Head of caudate nucleus (tissue), 42 donors: ENCODE measurements at regions of chr3 and their contacts with region 1.

Region 1: GRCh38 chr3:44861412-44862220 is at the start of gene TMEM42:
- DNase-seq: peak; percentile 83 to 97 (median 94)

Region 2: DNA sequence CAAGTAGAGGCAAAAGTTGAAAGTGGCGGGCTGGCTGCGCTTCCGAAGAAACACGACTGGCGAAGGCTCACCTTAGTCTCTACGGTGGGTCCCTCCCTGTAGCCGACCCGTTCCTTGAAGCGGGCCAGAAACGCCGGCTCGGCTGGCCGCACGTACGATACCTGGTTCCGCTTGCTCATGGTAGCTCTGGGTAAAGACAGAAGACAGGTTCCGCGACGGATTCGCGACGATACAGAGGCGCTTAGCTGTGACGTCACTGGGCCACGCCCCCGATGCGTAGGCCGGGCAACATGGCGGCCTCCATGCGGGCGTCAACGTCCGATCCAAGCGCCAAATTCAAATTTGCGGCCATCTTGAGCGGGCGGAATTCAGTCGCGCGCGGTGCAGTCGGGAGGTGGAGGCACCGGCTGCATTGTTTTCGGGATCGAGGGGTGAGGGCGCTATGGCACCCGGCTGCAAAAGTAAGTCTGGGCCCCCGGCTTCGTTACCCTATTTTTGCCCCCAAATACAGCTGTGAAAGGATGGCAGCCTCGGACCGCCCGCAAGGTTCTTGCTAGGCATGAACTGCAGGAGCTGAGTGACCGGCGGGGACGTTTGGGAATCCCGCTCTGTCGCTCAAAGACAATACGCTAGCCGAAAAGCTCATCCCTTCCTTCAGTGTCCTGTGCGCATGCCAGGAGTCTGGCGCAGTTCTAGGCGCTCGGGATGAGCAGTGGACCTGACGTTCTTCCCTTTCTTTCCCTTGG is 100.0 kb before region 1 on chr3 and contains the starts of genes KIAA1143 and KIF15:
- intact Hi-C with region 1: loop called (anchors 5 kb)
- DNase-seq: peak; percentile 93 to 99 (median 97)

Region 3: DNA sequence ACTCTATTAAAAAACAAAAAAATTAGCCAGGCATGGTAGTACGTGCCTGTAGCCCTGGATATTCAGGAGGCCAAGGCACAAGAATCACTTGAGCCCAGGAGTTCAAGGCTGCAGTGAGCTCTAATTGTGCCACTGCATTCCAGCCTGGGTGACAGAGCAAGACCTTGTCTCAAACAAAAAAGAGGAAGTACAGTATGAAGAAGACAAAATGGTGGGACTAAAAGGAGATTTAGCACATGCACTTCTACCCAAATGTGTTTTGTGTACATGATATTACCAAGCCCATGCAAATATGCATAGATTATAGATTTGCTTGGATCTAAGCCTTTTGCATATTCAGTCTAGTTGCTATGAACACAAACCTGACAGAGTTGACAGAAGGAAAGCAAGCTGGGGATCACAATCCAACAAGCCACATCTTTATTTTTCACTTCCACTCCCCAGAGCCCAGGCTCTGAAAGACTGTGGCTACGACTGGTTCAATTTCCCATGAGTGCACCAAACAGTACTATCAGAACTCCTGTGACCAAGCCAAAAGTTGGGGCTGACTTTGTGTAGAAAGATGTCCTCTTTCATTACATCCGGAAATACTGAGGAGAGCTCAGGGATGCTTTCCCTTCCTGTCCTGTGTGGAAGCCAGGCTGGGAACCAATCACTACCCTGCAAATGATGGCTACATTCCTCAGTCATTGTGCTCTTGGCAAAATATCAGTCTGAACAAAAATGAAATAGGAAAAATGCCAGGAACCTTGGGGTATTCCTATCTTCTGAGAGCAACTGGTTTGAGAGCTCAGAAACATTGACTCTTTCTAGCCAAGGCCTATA is 62.2 kb after region 1 on chr3:
- intact Hi-C with region 1: no loop called
- DNase-seq: no peak

Region 4: GRCh38 chr3:44976002-44976815 is 114.6 kb after region 1 on chr3 and contains the starts of genes EXOSC7 and ZDHHC3:
- intact Hi-C with region 1: loop called (anchors 5 kb)
- DNase-seq: peak; percentile 68 to 94 (median 88)